Posterior vena cava (tissue), 2 donors: ENCODE measurements at regions of chr1 and their contacts with region 1.

Region 1: DNA sequence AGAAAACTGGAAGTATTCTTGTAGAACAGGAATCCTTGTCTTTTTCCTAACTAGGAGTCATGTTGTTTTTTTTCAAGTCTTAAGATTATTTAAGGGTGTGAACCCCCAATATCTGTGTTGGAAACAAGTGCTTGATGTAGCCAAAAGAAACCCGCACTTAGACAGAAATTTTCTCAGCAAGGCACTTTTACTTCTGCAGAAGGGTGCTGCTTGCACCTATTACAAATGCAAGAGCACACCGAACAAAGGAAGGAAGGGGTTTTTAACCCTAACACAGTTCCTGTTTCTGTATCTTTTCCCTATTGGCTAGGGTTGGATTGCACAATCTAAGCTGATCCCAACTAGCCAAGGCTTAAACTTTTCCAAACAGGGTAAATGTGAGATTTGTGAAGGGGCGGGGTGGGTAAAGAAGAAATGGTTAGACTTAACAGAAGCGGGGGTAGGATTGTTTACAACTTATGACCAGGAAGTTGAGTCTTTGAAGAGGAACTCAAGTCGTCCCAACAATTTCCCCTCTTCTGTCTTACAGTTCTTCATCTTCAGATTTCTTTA is 75.1 kb downstream of the ZFYVE9 start:
- DNase-seq: no peak

Region 2: DNA sequence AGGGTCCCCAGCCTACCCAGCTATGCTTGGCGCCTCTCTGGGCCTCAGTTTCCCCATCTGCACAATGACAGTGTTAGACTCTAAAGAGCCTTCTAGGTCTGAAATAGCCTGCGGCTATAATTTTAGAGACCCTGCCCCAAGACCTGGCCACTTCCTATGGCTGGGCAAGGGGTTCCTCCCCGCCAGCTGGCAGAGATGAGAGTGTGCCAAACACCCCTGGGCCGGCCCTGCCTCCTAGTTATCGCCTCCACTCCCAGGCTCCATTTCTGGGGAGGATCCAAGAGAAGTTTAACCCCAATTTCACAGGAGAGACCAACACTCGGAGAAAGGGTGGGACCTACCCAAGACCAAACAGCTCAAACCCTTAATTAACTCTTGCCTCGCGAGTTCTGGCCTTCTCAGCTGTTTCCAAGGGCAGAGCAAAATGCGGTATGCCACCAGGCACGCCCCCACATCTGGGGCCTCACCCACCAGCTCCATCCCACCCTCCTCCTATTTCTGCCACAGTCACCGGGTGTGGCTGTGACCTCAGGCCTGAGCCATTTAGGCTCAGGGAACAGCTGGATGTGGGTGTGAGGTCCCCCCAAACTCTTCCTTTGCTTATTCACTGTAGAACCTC is 922.3 kb before region 1 on chr1:
- intact Hi-C with region 1: loop called in 1 of 2 experiments (anchors 5 kb)
- DNase-seq: peak; percentile 53